ENCODE measurements at regions of chr3 and their contacts with region 1.

Region 1: DNA sequence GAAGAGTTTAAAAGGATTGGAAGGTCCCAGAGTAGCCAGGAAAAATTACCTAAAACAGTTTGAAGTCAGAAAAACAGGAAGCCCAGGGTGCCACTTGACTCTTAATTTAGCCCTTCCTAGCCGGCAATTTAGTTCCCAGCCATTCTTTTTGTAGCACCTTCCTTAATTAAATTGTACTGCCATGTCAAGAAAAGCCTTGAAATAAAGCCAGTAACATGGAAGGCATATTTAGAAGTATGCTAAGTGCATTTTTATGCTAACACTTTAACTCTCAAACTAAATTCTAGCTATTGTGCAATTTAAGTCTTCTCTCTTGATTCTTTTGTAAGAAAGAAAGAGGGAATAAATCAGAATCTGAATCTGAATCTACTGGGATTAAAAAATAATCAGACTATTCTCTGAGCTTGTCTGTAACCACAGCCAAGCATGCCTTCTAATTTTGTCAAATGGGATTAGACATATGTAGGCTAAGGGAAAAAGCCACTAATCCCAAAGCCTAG is 43.2 kb downstream of the MAP3K13 start:
- DNase-seq: no peak
- ATAC-seq: no peak
- H3K4me3 ChIP-seq: no peak overlapping the region
- H3K27ac ChIP-seq: no peak overlapping the region
- H3K4me1 ChIP-seq: no peaks in the 10 kb centered on the region
- H3K27me3 ChIP-seq: peaks cover 4% of the 10 kb centered on the region
- CTCF ChIP-seq: no peak

Region 2: DNA sequence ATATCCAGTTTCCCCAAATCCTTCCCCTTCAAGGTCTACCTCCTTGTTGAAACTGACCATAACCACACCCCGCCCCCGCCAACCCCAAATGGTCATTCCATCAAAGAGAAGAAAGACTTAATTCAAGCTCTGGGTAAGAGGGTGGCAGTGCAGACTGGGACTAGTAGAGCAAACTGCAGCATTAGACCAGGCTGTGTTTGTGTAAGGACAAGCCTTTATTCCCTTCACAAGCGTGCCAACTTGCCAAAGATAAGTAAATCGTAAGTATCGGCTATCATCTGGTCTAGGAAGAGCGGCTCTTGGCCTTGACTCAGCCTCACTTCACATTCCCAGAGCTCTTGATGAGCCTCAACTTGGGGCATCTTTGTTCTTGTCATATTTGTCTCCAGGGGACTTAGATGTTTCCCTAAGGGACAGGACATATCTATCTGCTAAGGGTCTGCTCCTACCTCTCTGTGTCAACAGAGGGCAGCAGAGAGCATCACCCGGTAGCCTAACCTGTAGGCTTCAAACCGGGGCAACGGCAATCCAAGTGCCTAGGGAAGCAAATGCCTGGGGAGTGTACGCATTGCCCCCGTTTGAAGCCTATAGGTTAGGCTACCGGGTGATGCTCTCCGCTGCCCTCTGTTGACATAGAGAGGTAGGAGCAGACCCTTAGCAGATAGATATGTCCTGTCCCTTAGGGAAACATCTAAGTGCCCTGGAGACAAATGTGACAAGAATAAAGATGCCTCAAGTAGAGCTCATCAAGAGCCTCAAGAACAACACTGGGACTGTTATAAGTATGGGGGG is 52.2 kb before region 1 on chr3:
- CTCF ChIA-PET with region 1: interaction called, 18 read pairs
- POLR2A ChIA-PET with region 1: no interaction called
- in situ Hi-C with region 1: no loop called
- intact Hi-C with region 1: no loop called
- DNase-seq: no peak
- ATAC-seq: peak; percentile 97
- H3K4me3 ChIP-seq: no peak overlapping the region
- H3K27ac ChIP-seq: no peak overlapping the region
- H3K4me1 ChIP-seq: no peaks in the 10 kb centered on the region
- H3K27me3 ChIP-seq: no peaks in the 10 kb centered on the region
- CTCF ChIP-seq: peak; percentile 89

Region 3: GRCh38 chr3:186152889-186153292 is 746.7 kb after region 1 on chr3:
- CTCF ChIA-PET with region 1: no interaction called
- POLR2A ChIA-PET with region 1: no interaction called
- in situ Hi-C with region 1: no loop called
- intact Hi-C with region 1: no loop called
- DNase-seq: no peak
- ATAC-seq: no peak
- H3K4me3 ChIP-seq: no peak overlapping the region
- H3K27ac ChIP-seq: no peak overlapping the region
- H3K4me1 ChIP-seq: no peaks in the 10 kb centered on the region
- H3K27me3 ChIP-seq: 0 out of 2 replicates have a peak, but pooled peaks cover 2% of the 10 kb centered on the region
- CTCF ChIP-seq: no peak